ENCODE measurements at regions of chr1 and their contacts with region 1.

Region 1: DNA sequence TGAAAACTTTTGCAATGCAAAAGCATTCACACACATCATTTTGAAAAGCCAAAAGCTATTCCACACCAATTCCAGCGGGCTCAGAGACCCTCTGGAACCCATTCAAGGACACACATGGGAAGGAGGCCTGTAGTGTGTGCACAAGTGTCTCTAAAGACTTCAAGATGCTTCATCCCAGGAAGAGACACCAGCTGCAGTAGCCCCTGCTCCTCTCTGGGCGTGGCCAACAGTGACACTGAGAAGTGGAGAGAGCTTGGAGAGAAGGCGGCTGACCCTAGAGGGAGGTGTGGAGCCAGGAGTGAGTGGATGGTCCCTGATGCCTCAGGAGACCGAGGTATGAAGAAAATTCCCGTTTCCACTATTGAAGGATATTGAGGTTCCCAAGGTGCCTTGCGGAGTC is 14.9 kb upstream of the TNNI1 start:
- DNase-seq: peak; percentile 81
- ATAC-seq: peak; percentile 57
- H3K4me3 ChIP-seq: no peak overlapping the region
- H3K27ac ChIP-seq: peak overlapping the region; percentile 47
- H3K4me1 ChIP-seq: peaks cover 21% of the 10 kb centered on the region
- H3K27me3 ChIP-seq: no peaks in the 10 kb centered on the region
- CTCF ChIP-seq: peak; percentile 79

Region 2: DNA sequence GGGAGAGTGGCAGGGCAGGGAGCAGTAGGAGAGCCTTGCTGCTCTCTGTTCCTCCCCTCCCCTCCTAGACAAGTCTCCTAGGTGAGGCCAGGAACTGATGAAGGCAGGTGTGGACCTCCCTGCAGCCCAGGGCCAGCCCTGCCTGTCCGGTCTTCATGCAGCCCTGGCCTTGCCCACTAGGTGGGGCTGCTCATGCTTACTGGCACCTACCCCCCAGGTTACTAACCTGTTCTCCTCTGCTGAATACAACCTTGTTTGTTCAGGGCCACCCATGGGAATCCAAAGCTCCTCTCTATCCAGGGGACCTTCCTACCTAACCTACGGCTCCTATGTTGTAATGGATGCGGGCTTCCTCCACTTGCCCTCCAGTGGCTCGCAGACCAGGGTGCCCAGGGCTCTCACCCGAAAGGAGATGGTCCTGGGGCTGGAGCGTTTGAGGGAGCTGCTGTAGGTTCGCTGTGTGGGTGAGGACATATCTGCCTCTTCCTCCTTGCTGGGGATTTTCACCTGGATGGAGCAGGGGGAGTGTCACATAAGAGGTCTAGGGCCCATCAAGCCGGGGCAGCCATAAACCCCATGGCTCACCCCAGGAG is 51.0 kb before region 1 on chr1:
- CTCF ChIA-PET with region 1: interaction called, 10 read pairs
- POLR2A ChIA-PET with region 1: interaction called, 3 read pairs
- intact Hi-C with region 1: loop called (anchors 1 kb)
- DNase-seq: peak; percentile 99
- ATAC-seq: peak; percentile 74
- H3K4me3 ChIP-seq: no peak overlapping the region
- H3K27ac ChIP-seq: no peak overlapping the region
- H3K4me1 ChIP-seq: peaks cover 27% of the 10 kb centered on the region
- H3K27me3 ChIP-seq: no peaks in the 10 kb centered on the region
- CTCF ChIP-seq: peak; percentile 100

Region 3: DNA sequence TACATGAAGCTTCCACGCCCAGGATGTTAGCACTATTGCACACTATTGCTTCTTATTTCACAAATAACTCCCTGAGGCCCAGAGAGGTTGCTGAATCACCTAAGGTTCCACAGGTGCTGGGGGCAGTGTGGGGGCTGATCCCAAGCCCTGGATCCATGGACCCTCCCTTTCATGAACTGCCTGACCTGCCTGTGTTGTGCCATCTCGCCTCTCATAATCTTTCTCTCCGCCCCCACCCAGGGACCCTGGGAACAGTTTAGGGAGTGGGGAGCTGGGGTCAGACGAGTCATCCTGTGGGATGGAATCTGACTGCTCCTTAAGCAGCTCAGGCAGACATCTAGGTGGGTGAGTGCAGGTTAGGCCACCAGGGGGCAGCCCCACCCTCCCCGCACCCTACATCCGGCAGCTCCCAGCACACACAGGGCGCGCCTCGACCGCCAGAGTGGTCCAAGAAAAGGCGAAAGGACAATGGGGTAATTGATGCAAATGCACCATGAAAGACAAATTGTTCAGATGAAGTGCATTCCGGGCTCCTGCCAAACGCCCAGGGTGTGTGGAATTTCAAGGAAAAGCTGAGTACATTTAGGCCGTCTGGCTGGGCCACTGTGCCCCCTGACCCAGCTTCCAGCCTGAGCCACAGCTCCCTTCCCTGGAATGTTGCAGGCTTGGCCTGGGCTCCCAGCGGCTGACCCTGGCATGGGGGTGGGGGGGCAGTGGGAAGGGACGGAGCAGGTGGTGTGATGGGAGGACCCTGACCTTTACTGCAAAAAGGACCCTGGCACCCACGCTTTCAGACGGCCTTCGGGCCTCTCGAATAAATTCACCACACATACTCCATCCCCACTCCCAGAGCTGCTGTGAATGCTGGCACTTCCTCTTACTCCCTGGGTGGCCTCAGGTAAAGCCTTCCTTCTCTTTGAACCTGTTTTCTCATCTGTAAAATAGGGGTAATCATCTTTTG is 11.8 kb after region 1 on chr1:
- CTCF ChIA-PET with region 1: interaction called, 64 read pairs
- POLR2A ChIA-PET with region 1: interaction called, 8 read pairs
- intact Hi-C with region 1: no loop called
- DNase-seq: peak; percentile 97
- ATAC-seq: peak; percentile 97
- H3K4me3 ChIP-seq: no peak overlapping the region
- H3K27ac ChIP-seq: peak overlapping the region; percentile 27
- H3K4me1 ChIP-seq: peaks cover 29% of the 10 kb centered on the region
- H3K27me3 ChIP-seq: no peaks in the 10 kb centered on the region
- CTCF ChIP-seq: peak; percentile 100

Region 4: DNA sequence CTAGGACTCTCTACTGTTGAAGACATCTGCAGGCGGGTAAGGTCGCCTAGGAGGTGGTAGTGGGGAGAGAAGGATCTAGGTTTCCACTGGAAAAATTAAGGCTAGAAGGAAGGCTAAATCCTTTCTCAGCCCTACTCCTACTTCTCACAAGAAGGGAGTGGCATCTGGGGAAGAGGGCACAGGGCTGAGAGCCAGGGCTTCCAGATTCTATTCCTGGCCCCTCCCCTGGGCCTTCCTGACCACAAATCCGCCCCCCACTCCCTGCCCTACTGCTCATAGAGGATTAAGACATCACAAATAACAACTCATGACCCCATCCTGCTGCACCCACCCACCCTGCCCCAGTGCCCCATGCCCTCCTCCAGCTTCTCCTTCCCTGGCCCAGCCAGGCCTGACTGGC is 30.1 kb after region 1 on chr1:
- CTCF ChIA-PET with region 1: interaction called, 31 read pairs
- POLR2A ChIA-PET with region 1: interaction called, 3 read pairs
- intact Hi-C with region 1: loop called (anchors 1 kb)
- DNase-seq: peak; percentile 100
- ATAC-seq: peak; percentile 35
- H3K4me3 ChIP-seq: peak overlapping the region; percentile 70
- H3K27ac ChIP-seq: peak overlapping the region; percentile 84
- H3K4me1 ChIP-seq: peaks cover 60% of the 10 kb centered on the region
- H3K27me3 ChIP-seq: no peaks in the 10 kb centered on the region
- CTCF ChIP-seq: no peak

Region 5: DNA sequence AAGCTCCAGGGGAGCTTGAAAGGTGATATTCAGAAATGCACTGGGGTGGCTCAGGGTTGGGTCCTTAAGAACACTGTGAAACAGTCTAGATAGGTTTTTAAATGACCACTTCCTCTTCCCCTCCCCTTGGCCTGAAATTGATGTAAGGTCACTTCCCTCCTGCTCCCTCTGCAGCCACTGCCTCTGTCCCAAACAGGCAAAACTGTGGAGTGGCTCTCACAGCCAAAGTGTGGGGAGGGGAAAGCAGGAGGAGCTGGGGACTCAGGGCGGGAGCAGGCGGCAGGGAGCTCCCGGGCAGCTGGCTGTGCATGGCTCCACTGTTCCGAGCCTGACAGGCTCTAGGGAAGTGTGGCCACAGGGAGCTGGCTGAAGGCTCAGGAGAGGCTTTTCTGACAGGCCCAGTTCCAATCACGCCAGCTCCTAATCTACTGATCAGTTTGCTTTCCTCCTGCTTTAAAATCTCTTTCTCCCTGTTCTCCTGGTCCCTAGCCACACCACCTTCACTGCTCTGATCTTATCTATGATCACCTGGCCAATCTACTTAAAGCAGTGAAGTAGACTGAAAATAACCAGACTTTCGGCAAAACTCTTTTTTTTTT is 75.6 kb after region 1 on chr1:
- CTCF ChIA-PET with region 1: interaction called, 19 read pairs
- POLR2A ChIA-PET with region 1: no interaction called
- intact Hi-C with region 1: loop called (anchors 1 kb)
- DNase-seq: peak; percentile 16
- ATAC-seq: peak; percentile 9
- H3K4me3 ChIP-seq: no peak overlapping the region
- H3K27ac ChIP-seq: peak overlapping the region; percentile 48
- H3K4me1 ChIP-seq: peaks cover 67% of the 10 kb centered on the region
- H3K27me3 ChIP-seq: no peaks in the 10 kb centered on the region
- CTCF ChIP-seq: no peak

Region 6: GRCh38 chr1:201870397-201870796 is 434.0 kb after region 1 on chr1:
- CTCF ChIA-PET with region 1: no interaction called
- POLR2A ChIA-PET with region 1: no interaction called
- intact Hi-C with region 1: no loop called
- DNase-seq: no peak
- ATAC-seq: no peak
- H3K4me3 ChIP-seq: no peak overlapping the region
- H3K27ac ChIP-seq: no peak overlapping the region
- H3K4me1 ChIP-seq: no peaks in the 10 kb centered on the region
- H3K27me3 ChIP-seq: no peaks in the 10 kb centered on the region
- CTCF ChIP-seq: no peak

Measured in PC-3 (cell line).